ENCODE measurements at regions of chr3 and their contacts with region 1.

Region 1: DNA sequence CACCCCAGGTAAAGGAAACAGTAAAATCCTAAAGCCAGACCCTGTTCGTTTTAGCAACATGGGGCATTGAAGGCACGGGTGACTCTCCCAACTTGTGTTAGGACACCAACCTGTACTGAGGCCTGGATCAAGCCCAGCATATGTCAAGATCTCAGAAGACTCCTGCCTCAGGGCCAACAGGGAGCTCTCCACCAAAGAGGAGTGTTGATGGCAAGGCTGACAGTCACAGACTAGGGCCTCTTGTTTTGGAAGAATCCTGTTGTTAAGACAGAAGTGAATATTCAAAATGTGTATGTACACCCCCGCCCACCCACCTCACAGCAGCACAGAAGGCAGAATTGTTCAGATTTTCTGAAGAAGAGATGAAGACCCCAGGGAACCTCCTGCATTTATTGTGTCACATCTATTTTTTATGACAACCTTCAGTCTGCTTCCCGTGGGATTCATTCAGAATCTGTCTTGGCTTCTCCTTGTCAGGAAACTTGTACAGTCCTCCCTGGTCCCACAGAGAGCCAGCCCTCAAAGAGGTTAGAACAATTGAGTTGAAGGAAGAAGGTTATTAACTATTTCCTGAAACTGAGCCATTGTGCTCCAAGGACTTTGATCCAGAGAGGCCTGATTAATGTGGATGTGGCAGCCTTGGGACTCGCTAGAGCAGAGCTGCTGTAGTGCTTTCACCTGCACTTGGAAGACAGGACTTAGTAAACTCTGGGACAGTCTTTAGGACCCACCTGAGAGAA is 61.7 kb upstream of the PLXNA1 start:
- DNase-seq: no peak
- H3K4me3 ChIP-seq: no peak overlapping the region
- H3K27me3 ChIP-seq: no peaks in the 10 kb centered on the region
- CTCF ChIP-seq: no peak

Region 2: DNA sequence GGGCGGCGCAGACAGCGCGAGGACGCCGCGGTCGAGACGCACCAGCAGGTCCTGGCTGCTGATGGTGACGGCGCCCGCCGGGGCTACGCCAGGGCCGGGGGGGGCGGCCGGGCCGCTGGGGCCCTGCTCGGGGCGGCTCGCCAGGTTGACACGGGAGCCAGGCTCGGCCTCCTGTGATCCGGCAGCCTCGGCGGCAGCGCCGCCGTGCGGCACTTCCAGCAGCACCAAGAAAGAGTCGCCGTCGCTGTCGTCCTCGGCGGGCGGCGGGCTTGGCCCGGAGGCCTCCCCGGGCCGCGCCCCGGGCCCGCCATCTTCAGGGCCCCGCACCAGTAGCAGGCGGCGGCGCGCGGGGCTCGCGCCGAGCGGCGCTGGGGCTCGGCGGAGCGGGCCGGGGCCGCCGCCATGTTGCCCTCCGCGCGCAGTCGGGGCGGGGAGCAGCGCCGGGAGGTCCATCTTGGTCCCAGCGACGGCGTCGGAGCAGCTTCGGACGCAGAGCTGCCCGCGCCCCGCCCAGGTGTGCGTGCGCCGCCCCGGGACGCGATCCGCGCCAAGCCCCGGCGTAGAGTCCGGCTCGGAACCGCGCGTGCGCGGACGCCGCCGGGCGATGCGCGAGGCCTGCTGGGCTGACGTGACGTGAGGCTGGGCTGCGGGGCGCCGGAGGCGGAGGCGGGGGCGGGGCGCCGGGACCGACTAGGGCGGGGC is 445.7 kb before region 1 on chr3 and contains the start of gene ZXDC:
- CTCF ChIA-PET with region 1: no interaction called
- POLR2A ChIA-PET with region 1: interaction called, 20 read pairs
- DNase-seq: peak; percentile 65
- H3K4me3 ChIP-seq: peak within 1 kb of the TSS; percentile 74
- H3K27me3 ChIP-seq: no peaks in the 10 kb centered on the region
- CTCF ChIP-seq: peak; percentile 42
- polyA plus RNA-seq, gene ZXDC: 11.9 and 15.8 TPM in 2 replicates